ENCODE measurements at regions of chr19 and their contacts with region 1.

Region 1: DNA sequence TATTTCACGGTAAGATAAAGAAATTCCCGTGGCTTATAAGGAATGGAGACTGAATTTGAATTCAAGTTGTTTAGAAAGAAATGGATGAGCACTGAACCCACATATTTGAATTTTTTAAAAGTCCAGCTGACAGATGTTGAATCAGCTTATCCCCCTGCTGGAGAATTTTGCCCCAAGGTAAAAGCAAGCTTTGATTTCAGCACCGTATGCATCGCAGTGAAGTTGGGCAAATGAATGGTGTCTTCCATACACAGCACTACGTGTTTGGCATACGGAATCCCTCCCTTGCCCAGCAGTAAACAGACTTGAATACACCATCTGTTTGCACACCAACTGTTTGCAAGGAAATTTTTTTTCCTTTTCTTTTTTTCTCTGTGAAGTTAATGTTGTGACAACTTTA is 77.5 kb upstream of the PEG3 start:
- DNase-seq: no peak
- H3K4me3 ChIP-seq: no peak overlapping the region
- H3K27ac ChIP-seq: no peak overlapping the region
- H3K4me1 ChIP-seq: no peaks in the 10 kb centered on the region
- H3K27me3 ChIP-seq: no peaks in the 10 kb centered on the region
- CTCF ChIP-seq: no peak

Region 2: DNA sequence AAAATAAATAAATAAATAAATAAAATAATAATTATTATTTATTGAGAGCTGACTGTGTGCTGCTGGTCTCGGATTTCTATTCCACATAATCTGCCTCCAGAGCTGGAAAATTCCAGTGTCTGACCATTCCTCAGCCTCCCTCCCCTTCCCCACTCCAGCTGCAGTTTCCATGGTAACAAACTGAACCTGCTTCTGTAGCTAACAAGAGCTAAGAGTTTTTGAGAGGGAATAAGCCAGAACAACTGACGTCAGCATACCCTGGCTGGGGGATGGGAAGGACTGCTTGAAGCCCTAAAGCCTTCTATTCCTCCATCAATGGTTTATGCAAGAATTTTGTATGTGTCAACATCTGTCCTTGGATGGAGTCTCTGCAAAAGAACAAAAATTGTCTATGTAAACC is 51.5 kb before region 1 on chr19:
- CTCF ChIA-PET with region 1: no interaction called
- dilution Hi-C with region 1: loop called (anchors 5 kb)
- in situ Hi-C with region 1: no loop called
- intact Hi-C with region 1: no loop called
- DNase-seq: no peak
- H3K4me3 ChIP-seq: no peak overlapping the region
- H3K27ac ChIP-seq: no peak overlapping the region
- H3K4me1 ChIP-seq: no peaks in the 10 kb centered on the region
- H3K27me3 ChIP-seq: no peaks in the 10 kb centered on the region
- CTCF ChIP-seq: no peak

Region 3: DNA sequence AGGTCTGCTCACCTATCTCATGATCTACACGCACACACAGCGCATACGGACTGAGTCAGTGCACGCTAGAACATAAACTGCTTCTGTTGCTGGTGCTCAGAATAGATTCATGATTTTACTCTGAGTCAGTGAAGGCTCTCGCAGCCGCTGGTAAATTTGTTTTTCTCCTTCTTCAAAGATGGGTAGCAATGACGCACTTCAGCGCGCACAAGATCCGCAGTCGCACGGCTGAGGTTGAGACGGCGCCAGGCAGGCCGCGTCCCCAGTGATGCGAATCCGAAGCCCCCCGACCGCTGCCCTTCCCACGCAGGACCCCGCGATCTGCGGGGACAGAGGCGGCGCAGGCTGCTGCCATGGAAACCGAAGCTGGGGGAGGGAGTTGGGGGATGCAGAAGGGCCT is 98.1 kb after region 1 on chr19:
- CTCF ChIA-PET with region 1: no interaction called
- dilution Hi-C with region 1: loop called (anchors 5 kb)
- in situ Hi-C with region 1: no loop called
- intact Hi-C with region 1: no loop called
- DNase-seq: no peak
- H3K4me3 ChIP-seq: no peak overlapping the region
- H3K27ac ChIP-seq: no peak overlapping the region
- H3K4me1 ChIP-seq: no peaks in the 10 kb centered on the region
- H3K27me3 ChIP-seq: no peaks in the 10 kb centered on the region
- CTCF ChIP-seq: no peak